ENCODE measurements at regions of chr4 and their contacts with region 1.

Region 1: DNA sequence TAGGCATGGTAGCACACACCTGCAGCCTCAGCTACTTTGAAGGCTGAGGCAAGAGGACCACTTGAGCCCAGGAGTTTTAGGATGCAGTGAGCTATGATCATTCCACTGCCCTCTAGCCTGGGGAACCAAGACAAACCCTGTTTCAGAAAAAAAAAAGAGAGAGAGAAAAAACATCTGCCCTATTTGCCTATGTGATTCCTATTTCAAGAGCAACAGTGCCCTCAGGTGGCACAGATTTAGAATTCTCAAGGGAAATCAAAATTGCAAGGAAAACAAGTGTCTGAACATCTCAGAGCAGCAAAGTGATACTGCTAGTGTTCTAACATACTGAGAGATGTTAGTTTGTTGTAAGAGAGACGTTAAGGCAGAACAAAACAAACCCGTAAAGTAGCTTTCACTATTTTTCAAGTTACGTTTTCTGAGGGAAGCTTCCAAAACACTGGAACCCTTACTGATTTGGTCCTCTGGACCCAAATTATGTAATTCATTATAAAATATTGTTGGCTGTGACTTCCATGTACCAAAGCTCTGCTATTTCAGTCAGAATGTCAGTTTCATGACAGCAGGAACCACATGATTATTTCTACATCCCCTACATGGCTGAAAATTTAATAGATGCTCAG is 7.9 kb downstream of the BDH2 start:
- DNase-seq: peak; percentile 42 to 56
- H3K4me3 ChIP-seq: no peak overlapping the region
- H3K4me3 Mint-ChIP-seq: no peak overlapping the region
- H3K27ac Mint-ChIP-seq: no peak overlapping the region
- H3K4me1 ChIP-seq: no peaks in the 10 kb centered on the region
- H3K4me1 Mint-ChIP-seq: peaks cover 3% of the 10 kb centered on the region
- H3K27me3 ChIP-seq: no peaks in the 10 kb centered on the region
- H3K27me3 Mint-ChIP-seq: no peaks in the 10 kb centered on the region
- CTCF ChIP-seq: peak; percentile 44 to 57

Region 2: DNA sequence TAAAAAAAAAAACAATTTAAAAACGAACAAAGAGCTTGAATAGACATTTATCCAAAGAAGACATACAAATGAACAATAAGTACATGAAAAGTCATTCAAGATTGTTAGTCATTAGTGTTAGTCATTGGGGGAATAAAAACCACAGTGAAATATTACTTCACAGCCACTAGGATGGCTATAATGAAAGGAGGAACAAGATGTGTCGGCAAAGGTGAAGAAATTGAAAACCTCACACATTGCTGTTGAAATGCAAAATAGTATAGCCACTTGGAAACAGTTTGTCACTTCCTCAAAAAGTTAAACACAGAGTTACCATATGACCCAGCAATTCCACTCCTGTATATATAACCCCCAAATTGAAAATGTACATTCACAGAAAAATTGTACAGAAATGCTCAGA is 701.3 kb before region 1 on chr4:
- CTCF ChIA-PET with region 1: no interaction called
- POLR2A ChIA-PET with region 1: no interaction called
- intact Hi-C with region 1: no loop called
- DNase-seq: no peak
- H3K4me3 ChIP-seq: no peak overlapping the region
- H3K4me3 Mint-ChIP-seq: no peak overlapping the region
- H3K27ac Mint-ChIP-seq: no peak overlapping the region
- H3K4me1 ChIP-seq: no peaks in the 10 kb centered on the region
- H3K4me1 Mint-ChIP-seq: peaks cover 7% of the 10 kb centered on the region
- H3K27me3 ChIP-seq: no peaks in the 10 kb centered on the region
- H3K27me3 Mint-ChIP-seq: peaks cover 9% of the 10 kb centered on the region
- CTCF ChIP-seq: no peak

Region 3: GRCh38 chr4:102430461-102430910 is 661.2 kb before region 1 on chr4:
- CTCF ChIA-PET with region 1: no interaction called
- POLR2A ChIA-PET with region 1: no interaction called
- intact Hi-C with region 1: loop called (anchors 5 kb)
- DNase-seq: no peak
- H3K4me3 ChIP-seq: peak overlapping the region; percentile 41
- H3K4me3 Mint-ChIP-seq: peak overlapping the region; percentile 82
- H3K27ac Mint-ChIP-seq: peak overlapping the region; percentile 77
- H3K4me1 ChIP-seq: peaks cover 5% of the 10 kb centered on the region; the same call in 1 of the 2 replicates
- H3K4me1 Mint-ChIP-seq: peaks cover 10% of the 10 kb centered on the region
- H3K27me3 ChIP-seq: no peaks in the 10 kb centered on the region
- H3K27me3 Mint-ChIP-seq: no peaks in the 10 kb centered on the region
- CTCF ChIP-seq: no peak

Region 4: DNA sequence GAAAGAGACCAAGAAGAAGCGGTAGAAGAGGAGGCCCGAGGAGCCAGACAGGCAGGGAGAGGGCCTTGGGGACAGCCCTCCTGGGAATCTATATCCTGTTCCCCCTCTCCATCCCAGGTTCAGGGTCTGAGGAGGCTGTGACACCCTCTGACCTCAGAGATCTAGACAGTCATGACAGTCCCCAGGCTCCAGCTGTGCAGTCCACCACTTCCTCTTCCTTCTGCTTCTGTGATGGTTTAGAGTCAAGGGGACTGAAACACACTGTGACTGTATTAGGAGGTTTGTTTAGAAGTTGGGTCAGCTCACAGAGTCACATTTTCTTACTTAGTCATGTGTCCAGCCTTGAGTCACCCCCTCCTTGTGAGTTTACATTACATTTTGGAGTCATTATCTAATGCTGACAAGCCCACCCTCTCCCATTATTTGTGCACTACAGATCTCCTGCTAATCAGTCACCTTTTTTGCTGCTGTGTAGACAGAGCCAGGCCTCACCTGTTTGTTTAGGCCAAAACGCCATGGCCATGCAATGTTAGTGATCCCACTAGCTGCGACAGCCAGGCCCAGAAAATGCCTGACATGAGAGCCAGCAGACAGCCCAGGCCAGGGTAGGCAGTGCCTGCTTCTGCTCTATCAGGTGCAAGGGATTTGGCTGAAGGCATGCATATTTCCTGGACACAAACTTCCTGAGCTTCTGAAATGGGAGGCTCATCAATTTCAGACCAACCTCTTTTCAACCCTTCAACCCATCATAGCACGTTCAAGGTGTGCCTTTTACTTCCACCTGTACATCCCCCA is 356.9 kb before region 1 on chr4:
- CTCF ChIA-PET with region 1: no interaction called
- POLR2A ChIA-PET with region 1: no interaction called
- intact Hi-C with region 1: no loop called
- DNase-seq: no peak
- H3K4me3 ChIP-seq: no peak overlapping the region
- H3K4me3 Mint-ChIP-seq: no peak overlapping the region
- H3K27ac Mint-ChIP-seq: peak overlapping the region; percentile 27
- H3K4me1 ChIP-seq: peaks cover 31% of the 10 kb centered on the region
- H3K4me1 Mint-ChIP-seq: peaks cover 32% of the 10 kb centered on the region
- H3K27me3 ChIP-seq: no peaks in the 10 kb centered on the region
- H3K27me3 Mint-ChIP-seq: no peaks in the 10 kb centered on the region
- CTCF ChIP-seq: no peak

Region 5: GRCh38 chr4:103032574-103032973 is 59.1 kb before region 1 on chr4:
- CTCF ChIA-PET with region 1: interaction called, 5 read pairs
- POLR2A ChIA-PET with region 1: no interaction called
- intact Hi-C with region 1: loop called (anchors 1 kb)
- DNase-seq: peak; percentile 59 to 64
- H3K4me3 ChIP-seq: no peak overlapping the region
- H3K4me3 Mint-ChIP-seq: no peak overlapping the region
- H3K27ac Mint-ChIP-seq: no peak overlapping the region
- H3K4me1 ChIP-seq: no peaks in the 10 kb centered on the region
- H3K4me1 Mint-ChIP-seq: no peaks in the 10 kb centered on the region
- H3K27me3 ChIP-seq: no peaks in the 10 kb centered on the region
- H3K27me3 Mint-ChIP-seq: no peaks in the 10 kb centered on the region
- CTCF ChIP-seq: peak; percentile 47 to 69

Region 6: DNA sequence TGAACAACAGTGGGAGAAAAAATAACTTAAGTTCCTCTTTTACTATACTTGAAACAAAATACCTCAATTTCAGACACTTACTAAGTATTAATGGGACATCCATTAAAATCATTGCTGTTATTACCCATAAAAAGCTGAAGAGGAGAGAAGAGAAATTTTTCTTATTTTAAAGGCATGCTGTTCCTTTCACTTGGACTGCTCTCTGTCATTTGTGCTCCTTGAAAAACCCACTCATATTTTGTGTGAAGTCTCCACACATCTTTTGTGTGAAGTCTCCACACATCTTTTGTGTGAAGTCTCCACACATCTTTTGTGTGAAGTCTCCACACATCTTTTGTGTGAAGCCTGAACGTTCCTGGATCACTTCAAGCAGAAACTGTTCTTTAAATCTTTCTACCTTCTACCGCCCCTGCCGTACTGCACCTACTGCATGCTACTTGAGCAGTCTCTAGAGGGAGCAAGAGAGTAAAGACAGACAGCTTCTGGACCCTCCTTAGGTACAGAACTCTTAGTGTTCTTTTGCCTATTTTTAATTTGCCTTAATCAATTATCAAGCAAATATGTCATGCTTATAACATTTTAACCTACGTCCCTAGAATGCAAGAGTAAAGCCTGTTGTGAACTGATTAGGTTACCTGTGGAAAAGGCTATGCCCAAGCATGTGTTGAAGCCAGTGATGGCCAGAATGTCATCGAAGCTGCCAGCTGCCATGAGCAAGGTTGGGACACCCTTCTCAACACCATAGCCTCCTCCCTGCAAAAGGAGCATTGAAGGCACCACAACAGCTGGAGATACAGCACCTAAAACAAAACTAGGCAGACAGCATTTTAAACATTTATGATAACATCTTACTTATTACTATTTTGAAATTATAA is 45.1 kb before region 1 on chr4:
- CTCF ChIA-PET with region 1: interaction called, 4 read pairs
- POLR2A ChIA-PET with region 1: no interaction called
- intact Hi-C with region 1: loop called (anchors 1 kb)
- DNase-seq: peak; percentile 43 to 57
- H3K4me3 ChIP-seq: no peak overlapping the region
- H3K4me3 Mint-ChIP-seq: no peak overlapping the region
- H3K27ac Mint-ChIP-seq: no peak overlapping the region
- H3K4me1 ChIP-seq: no peaks in the 10 kb centered on the region
- H3K4me1 Mint-ChIP-seq: no peaks in the 10 kb centered on the region
- H3K27me3 ChIP-seq: no peaks in the 10 kb centered on the region
- H3K27me3 Mint-ChIP-seq: no peaks in the 10 kb centered on the region
- CTCF ChIP-seq: peak; percentile 69 to 82